CD4-positive, alpha-beta T cell (primary cell): ENCODE measurements at regions of chr9 and their contacts with region 1.

Region 1: DNA sequence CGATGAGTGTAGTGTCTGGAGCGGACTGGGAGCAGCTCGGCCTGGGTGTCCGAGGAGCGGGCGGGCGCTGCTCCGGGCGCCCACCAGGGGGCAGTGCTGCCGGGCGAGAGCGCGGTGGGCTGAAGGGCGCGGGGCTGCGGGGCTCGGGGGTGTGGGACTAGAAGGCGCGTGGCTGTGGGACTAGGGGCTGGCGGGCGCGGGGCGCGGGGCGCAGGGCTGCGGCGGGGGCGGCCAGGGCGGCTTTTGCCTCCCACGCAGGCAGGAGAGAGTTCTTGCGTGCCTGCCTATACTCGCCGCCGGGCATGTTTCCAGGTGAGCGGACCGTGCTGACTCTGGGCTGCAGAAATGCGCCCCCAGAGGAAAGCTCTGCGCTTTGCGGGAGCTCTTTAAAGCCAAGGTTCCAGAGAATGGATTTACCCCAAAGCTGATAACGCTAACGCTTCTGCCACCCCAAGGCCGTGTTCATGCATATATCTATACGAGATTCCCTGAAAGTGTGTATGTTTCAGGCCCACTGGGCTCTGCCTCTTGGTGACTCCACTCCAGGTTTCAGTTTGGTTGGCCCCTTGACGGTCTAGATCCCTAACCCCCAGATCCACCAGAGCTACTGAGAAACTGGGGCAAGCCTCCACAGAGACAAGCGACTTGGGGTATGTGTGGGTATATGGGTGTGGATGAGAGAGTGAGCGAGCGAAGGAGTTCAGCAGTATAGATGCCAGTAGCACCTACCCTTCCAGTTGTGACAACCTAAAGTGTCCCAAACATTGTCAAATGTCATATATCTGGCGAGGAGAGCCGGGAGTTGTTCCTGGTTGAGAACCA is 56.2 kb downstream of the ACER2 start:
- DNase-seq: peak; percentile 46 to 85 (median 65)
- ATAC-seq: peak; percentile 92
- H3K4me3 ChIP-seq: peak overlapping the region; percentile 36
- H3K4me3 Mint-ChIP-seq: peak overlapping the region; percentile 95
- H3K27ac ChIP-seq: no peak overlapping the region
- H3K27ac Mint-ChIP-seq: no peak overlapping the region
- H3K4me1 ChIP-seq: peaks cover 11% of the 10 kb centered on the region
- H3K4me1 Mint-ChIP-seq: no peaks in the 10 kb centered on the region
- H3K27me3 ChIP-seq: no peaks in the 10 kb centered on the region
- H3K27me3 Mint-ChIP-seq: no peaks in the 10 kb centered on the region
- CTCF ChIP-seq: peak; percentile 74

Region 2: DNA sequence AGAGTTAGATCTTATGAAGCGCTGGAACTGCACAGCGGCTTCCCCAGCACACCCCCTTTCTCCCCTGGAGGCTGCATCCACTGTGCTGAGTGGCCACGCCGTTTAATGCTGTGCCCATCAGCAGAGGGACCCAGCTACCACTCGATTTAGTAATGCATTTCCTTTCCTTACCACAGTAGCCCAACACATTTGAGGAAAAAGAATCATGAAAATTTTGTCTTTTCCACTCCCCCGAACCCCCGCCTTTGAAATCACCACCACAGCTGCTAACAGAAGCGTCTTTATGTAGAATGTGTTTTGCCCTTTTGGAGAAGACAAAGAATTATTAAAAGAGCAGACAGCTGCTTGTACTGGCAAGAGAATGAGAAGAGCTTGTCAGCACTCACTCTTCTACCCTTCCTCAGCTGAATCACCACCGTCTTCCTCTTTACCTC is 17.0 kb after region 1 on chr9:
- CTCF ChIA-PET with region 1: interaction called, 17 read pairs
- POLR2A ChIA-PET with region 1: no interaction called
- intact Hi-C with region 1: no loop called
- DNase-seq: no peak
- ATAC-seq: no peak
- H3K4me3 ChIP-seq: no peak overlapping the region
- H3K4me3 Mint-ChIP-seq: no peak overlapping the region
- H3K27ac ChIP-seq: no peak overlapping the region
- H3K27ac Mint-ChIP-seq: no peak overlapping the region
- H3K4me1 ChIP-seq: no peaks in the 10 kb centered on the region
- H3K4me1 Mint-ChIP-seq: no peaks in the 10 kb centered on the region
- H3K27me3 ChIP-seq: no peaks in the 10 kb centered on the region
- H3K27me3 Mint-ChIP-seq: peaks cover 9% of the 10 kb centered on the region
- CTCF ChIP-seq: no peak

Region 3: GRCh38 chr9:19512103-19512832 is 47.3 kb after region 1 on chr9:
- CTCF ChIA-PET with region 1: no interaction called
- POLR2A ChIA-PET with region 1: no interaction called
- intact Hi-C with region 1: no loop called
- DNase-seq: no peak
- ATAC-seq: no peak
- H3K4me3 ChIP-seq: no peak overlapping the region
- H3K4me3 Mint-ChIP-seq: no peak overlapping the region
- H3K27ac ChIP-seq: no peak overlapping the region
- H3K27ac Mint-ChIP-seq: no peak overlapping the region
- H3K4me1 ChIP-seq: no peaks in the 10 kb centered on the region
- H3K4me1 Mint-ChIP-seq: peaks cover 13% of the 10 kb centered on the region
- H3K27me3 ChIP-seq: peaks cover 0 to 5% of the 10 kb centered on the region in 2 experiments
- H3K27me3 Mint-ChIP-seq: no peaks in the 10 kb centered on the region
- CTCF ChIP-seq: no peak

Region 4: DNA sequence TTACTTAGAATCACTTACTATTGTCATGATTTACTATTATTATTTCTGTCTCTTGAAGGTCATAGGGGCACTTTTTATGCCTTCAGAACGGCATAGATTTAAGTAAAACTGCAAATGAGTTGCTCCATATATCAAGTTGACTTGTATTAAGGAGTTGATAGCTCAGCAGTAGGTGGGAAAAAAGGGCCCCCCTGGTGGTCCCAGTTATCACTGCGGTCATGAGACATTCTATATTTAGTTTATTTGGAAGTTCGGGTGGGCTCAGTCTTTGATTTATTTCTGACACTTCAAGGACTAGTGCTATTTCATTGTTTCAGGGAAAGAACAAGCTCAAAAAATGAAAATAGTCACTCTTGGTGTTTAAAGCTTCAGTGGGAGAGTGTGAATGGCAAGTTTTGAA is 164.5 kb after region 1 on chr9:
- CTCF ChIA-PET with region 1: no interaction called
- POLR2A ChIA-PET with region 1: no interaction called
- intact Hi-C with region 1: no loop called
- DNase-seq: no peak
- ATAC-seq: no peak
- H3K4me3 ChIP-seq: no peak overlapping the region
- H3K4me3 Mint-ChIP-seq: no peak overlapping the region
- H3K27ac ChIP-seq: no peak overlapping the region
- H3K27ac Mint-ChIP-seq: no peak overlapping the region
- H3K4me1 ChIP-seq: no peaks in the 10 kb centered on the region
- H3K4me1 Mint-ChIP-seq: no peaks in the 10 kb centered on the region
- H3K27me3 ChIP-seq: no peaks in the 10 kb centered on the region
- H3K27me3 Mint-ChIP-seq: peaks cover 5% of the 10 kb centered on the region
- CTCF ChIP-seq: no peak